A549 (cell line): ENCODE measurements at regions of chr12 and their contacts with region 1.

Region 1: GRCh38 chr12:30795410-30796312 is 40.9 kb upstream of the CAPRIN2 start:
- DNase-seq: peak; percentile 69 to 77
- ATAC-seq: peak; percentile 77 to 80
- H3K4me3 ChIP-seq: peak overlapping the region; percentile 73
- H3K27ac ChIP-seq: peak overlapping the region; percentile 97 to 100
- H3K4me1 ChIP-seq: peaks cover 45% of the 10 kb centered on the region
- CTCF ChIP-seq: no peak
- EP300 ChIP-seq: peak in 1 of 2 experiments; percentile 1; a peak in 1 of 5 replicates
- POLR2A ChIP-seq: peak; percentile 55; the same call in 1 of the 2 replicates
- RAD21 ChIP-seq: no peak; a peak in 1 of 5 replicates

Region 2: DNA sequence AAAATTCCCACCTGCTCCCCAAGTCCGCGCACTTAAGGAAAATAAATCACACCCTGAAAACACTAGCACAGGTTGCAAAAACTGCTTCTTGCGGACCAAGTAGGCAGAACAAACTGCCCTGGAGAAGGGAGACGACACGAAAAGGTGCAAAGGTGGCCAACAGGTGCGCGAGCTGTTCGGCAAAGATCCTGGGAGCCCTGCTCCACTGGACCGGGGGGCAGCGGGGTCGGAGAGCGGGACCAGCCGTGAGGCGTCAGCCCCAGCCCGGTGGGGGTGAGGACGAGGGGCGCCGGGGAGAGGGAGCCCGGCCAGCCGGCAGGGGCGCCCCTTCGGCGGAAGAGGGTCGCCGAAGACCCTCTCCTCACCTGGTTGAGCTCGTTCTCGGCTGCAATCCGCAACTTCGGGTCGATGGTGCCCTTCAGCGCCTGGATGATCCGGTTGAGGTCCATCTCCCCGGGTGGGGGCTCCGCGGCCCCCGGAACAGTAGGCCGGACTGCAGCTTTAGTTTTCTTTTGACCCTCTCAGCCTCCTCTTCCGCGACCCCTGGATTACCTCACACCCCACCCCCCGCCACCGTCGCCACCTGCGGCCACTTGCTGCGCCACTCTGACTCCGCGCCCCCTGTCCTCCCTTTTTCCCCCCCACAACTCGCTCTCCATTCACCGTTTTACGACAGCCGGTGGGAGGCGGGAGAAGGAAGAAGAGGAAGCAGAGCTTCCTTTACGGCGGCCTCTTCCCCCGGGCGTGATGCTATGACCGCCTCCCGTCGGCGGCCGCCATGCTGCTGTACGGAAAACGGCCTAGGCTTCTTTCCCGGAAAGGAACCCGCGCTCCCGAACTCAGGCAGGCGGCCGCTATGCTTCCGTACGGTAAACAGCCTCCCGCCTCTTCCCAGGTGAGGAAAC is 100.2 kb before region 1 on chr12 and contains the start of gene IPO8:
- CTCF ChIA-PET with region 1: no interaction called
- POLR2A ChIA-PET with region 1: interaction called, 12 read pairs
- DNase-seq: peak; percentile 89 to 96
- ATAC-seq: peak; percentile 89 to 94
- H3K4me3 ChIP-seq: peak within 1 kb of the TSS; percentile 87
- H3K27ac ChIP-seq: peak within 1 kb of the TSS; percentile 87 to 96
- H3K4me1 ChIP-seq: peaks cover 28% of the 10 kb centered on the region; the same call in 2 of the 3 replicates
- CTCF ChIP-seq: peak; percentile 28; the same call in 1 of the 3 replicates
- EP300 ChIP-seq: no peak
- POLR2A ChIP-seq: peak; percentile 48
- RAD21 ChIP-seq: peak; percentile 12 to 16; a peak in 1 of 5 replicates
- polyA plus RNA-seq, gene IPO8: 23.1 and 41.6 TPM in 2 replicates

Region 3: GRCh38 chr12:30725739-30726138 is 69.9 kb before region 1 on chr12:
- CTCF ChIA-PET with region 1: no interaction called
- POLR2A ChIA-PET with region 1: interaction called, 10 read pairs
- DNase-seq: peak; percentile 47 to 56
- ATAC-seq: peak; percentile 76 to 86; a peak in 4 of 6 replicates
- H3K4me3 ChIP-seq: no peak overlapping the region
- H3K27ac ChIP-seq: peak overlapping the region in 1 of 2 experiments; percentile 68; a peak in 4 of 6 replicates
- H3K4me1 ChIP-seq: peaks cover 16% of the 10 kb centered on the region
- CTCF ChIP-seq: no peak
- EP300 ChIP-seq: no peak
- POLR2A ChIP-seq: no peak
- RAD21 ChIP-seq: no peak

Region 4: DNA sequence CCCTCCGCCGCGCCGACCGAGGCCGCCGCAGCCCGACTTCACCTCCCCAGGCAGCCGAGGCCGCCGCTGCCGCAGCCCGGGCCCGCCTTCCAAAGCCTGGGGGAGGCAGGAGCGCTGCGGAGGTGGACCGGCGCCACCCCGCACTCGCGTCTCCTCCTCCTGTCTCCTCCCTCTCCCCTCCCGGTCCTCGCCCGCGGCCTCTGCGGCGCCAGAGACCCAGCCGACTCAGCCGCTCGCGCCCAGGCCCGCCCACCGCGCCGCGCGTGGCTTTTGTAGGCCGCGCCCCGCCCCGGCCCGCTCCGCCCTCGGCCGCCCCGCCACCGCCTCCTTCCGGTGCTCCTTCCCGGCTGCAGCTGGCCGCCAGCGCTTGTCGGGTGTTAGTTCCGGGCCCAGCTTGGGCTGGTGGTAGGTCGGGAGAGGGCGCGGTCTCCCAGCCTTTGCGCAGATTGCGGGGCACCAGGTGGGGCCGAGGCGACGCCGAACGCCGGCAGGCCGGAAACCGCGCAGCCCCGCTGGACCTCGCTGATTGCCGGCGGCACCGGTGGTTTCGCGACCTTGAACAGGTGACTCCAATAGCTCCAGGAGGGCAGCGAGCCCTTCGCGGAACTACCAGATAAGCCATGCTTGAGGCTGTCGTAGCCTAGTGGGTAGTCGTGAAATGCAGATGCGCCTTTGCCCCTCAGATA is 40.8 kb before region 1 on chr12 and contains the start of gene CAPRIN2:
- CTCF ChIA-PET with region 1: interaction called, 17 read pairs
- POLR2A ChIA-PET with region 1: interaction called, 90 read pairs
- DNase-seq: peak; percentile 87 to 97
- ATAC-seq: peak; percentile 94 to 96
- H3K4me3 ChIP-seq: peak within 1 kb of the TSS; percentile 75
- H3K27ac ChIP-seq: peak within 1 kb of the TSS; percentile 89 to 98
- H3K4me1 ChIP-seq: peaks cover 28% of the 10 kb centered on the region; the same call in 2 of the 3 replicates
- CTCF ChIP-seq: peak; percentile 43
- EP300 ChIP-seq: peak in 1 of 2 experiments; percentile 12; a peak in 1 of 5 replicates
- POLR2A ChIP-seq: peak; percentile 74
- RAD21 ChIP-seq: peak; percentile 66 to 82
- polyA plus RNA-seq, gene CAPRIN2: 26.2 and 31.6 TPM in 2 replicates

Region 5: DNA sequence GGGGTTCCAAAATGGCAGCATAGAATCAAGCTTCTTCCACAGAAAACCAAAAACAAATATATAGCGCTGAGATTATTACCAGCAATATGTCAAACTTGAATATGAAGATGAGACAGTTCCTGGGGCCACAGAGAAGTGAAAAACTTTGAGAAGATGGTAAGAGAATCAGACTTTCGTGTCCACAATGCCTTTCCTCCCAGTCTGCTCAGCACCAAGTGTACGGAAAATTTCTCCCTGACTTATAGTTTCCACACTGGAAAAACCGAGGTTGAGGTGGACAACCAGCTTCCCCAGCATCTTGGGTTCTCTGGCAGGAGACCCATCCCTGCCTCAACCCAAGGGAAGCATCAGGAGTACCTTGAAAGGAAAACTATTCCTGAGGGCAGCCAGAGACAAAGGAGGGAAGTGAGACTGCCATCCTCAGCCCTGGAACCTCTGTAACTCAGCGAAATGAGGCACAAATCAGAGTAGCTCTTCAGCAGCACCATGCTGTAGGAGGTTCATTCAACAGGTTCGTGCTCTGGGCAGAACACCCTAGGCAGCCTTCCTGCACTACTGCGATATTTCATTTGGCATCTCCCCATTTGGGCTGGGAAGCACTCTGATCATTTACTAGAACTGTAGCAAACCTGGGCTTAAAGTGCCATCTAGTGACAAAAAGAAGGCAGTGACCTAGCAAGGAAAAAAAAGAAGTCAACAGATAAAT is 11.5 kb after region 1 on chr12:
- CTCF ChIA-PET with region 1: interaction called, 11 read pairs
- POLR2A ChIA-PET with region 1: interaction called, 3 read pairs
- DNase-seq: peak in 1 of 2 experiments; percentile 76
- ATAC-seq: peak; percentile 88 to 93
- H3K4me3 ChIP-seq: no peak overlapping the region
- H3K27ac ChIP-seq: no peak overlapping the region
- H3K4me1 ChIP-seq: no peaks in the 10 kb centered on the region
- CTCF ChIP-seq: peak; percentile 76
- EP300 ChIP-seq: no peak
- POLR2A ChIP-seq: no peak
- RAD21 ChIP-seq: peak; percentile 93 to 95

Region 6: DNA sequence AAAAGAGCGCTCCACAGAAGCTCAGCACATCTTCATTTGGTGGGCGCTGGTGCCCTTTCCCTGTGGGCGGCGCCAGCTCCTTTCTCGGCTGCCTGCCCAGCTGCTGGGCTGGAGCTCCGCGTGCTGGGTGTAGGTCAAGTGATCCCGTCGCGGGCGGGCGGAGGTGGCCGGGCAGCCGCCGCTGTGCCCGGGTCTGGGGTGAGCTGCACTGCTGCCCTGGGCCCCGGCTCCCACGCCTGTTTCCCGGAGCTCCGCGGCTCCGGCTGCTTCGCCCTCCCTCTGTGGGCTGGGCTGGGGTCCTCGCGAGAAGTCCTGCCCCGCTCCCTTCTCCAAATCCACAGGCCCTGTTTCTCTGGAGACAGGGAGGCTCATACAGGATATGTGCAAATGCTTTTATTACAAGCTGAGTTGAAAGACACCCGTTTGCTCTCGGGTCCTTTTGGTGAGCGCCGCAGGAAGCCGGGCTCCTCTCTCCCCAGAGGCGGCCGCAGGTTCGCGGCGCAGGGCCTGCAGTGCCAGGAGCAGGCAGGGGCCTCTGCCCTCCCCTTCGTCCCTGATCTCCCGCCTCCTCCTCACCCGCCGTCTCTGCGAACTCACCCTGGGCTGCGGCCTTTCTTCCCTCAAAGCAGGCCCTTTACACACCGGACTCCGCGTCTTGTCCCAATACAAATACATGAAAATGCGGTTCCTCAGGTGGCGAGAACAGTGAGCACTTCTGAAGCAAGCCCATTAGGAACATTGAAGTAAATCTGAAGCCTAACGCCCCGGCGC is 26.9 kb after region 1 on chr12:
- CTCF ChIA-PET with region 1: interaction called, 5 read pairs
- POLR2A ChIA-PET with region 1: interaction called, 12 read pairs
- DNase-seq: peak; percentile 52
- ATAC-seq: peak; percentile 74 to 85
- H3K4me3 ChIP-seq: peak overlapping the region; percentile 54
- H3K27ac ChIP-seq: peak overlapping the region; percentile 79 to 80
- H3K4me1 ChIP-seq: peaks cover 5% of the 10 kb centered on the region; the same call in 1 of the 3 replicates
- CTCF ChIP-seq: peak; percentile 26; the same call in 2 of the 3 replicates
- EP300 ChIP-seq: no peak
- POLR2A ChIP-seq: peak; percentile 25; the same call in 1 of the 2 replicates
- RAD21 ChIP-seq: no peak

Region 7: GRCh38 chr12:30840715-30841114 is 45.1 kb after region 1 on chr12:
- CTCF ChIA-PET with region 1: no interaction called
- POLR2A ChIA-PET with region 1: no interaction called
- DNase-seq: peak in 1 of 2 experiments; percentile 14
- ATAC-seq: no peak
- H3K4me3 ChIP-seq: no peak overlapping the region
- H3K27ac ChIP-seq: no peak overlapping the region
- H3K4me1 ChIP-seq: no peaks in the 10 kb centered on the region
- CTCF ChIP-seq: no peak
- EP300 ChIP-seq: no peak
- POLR2A ChIP-seq: no peak
- RAD21 ChIP-seq: no peak